Aorta (tissue), 5 donors: ENCODE measurements at regions of chr12 and their contacts with region 1.

Region 1: GRCh38 chr12:104057771-104058197 is 6.5 kb upstream of the HCFC2 start:
- DNase-seq: no peak
- ATAC-seq: no peak
- H3K4me3 ChIP-seq: no peak overlapping the region
- H3K27ac ChIP-seq: no peak overlapping the region
- H3K4me1 ChIP-seq: no peaks in the 10 kb centered on the region
- H3K27me3 ChIP-seq: no peaks in the 10 kb centered on the region

Region 2: DNA sequence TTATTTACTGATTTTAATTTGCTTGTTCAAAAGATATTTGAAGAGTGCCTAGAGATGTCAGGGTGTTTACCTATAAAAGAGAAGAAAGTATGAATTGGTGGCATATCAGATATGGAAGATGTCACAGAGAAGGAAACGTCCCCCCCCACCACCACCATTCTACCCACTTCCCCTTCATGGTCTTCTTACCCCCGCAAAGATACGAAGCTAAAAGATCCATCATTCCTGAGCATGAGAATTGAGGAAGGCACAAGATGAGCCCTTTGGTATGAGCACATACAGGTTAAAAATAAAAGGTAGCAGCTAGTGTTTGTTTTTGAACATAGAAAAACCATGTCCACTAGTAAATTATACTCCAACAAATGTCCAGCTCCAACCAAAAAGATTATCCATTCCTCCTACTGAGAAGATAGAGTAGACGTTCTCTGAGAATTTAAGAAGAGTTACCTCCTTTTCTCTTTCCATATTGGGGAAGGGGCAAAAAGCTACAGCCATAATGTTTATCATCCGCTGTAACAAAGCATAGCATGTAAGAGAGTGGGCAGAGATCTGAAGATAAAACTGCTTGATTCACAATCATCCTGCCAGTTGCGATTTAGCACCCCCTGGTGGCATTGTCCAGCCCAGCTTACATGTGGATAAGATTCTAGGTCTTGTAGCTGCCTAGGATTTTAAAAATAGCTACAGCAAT is 51.1 kb after region 1 on chr12:
- intact Hi-C with region 1: loop called (anchors 5 kb)
- DNase-seq: peak; percentile 89 to 92
- ATAC-seq: peak; percentile 86
- H3K4me3 ChIP-seq: no peak overlapping the region
- H3K27ac ChIP-seq: no peak overlapping the region
- H3K4me1 ChIP-seq: no peaks in the 10 kb centered on the region
- H3K27me3 ChIP-seq: no peaks in the 10 kb centered on the region